K562 (cell line): ENCODE measurements at regions of chr5 and their contacts with region 1.

Region 1: GRCh38 chr5:43401827-43402226 is 10.4 kb downstream of the CCL28 start:
- DNase-seq: peak; percentile 31 to 69 (median 53)
- ATAC-seq: peak; percentile 99
- H3K4me3 ChIP-seq: no peak overlapping the region
- H3K27ac ChIP-seq: no peak overlapping the region
- H3K4me1 ChIP-seq: peaks cover 3 to 4% of the 10 kb centered on the region in 2 experiments
- H3K27me3 ChIP-seq: no peaks in the 10 kb centered on the region
- CTCF ChIP-seq: peak; percentile 46 to 56 (median 53)
- EP300 ChIP-seq: no peak
- POLR2A ChIP-seq: no peak
- RAD21 ChIP-seq: peak; percentile 11 to 30; a peak in 2 of 4 replicates

Region 2: DNA sequence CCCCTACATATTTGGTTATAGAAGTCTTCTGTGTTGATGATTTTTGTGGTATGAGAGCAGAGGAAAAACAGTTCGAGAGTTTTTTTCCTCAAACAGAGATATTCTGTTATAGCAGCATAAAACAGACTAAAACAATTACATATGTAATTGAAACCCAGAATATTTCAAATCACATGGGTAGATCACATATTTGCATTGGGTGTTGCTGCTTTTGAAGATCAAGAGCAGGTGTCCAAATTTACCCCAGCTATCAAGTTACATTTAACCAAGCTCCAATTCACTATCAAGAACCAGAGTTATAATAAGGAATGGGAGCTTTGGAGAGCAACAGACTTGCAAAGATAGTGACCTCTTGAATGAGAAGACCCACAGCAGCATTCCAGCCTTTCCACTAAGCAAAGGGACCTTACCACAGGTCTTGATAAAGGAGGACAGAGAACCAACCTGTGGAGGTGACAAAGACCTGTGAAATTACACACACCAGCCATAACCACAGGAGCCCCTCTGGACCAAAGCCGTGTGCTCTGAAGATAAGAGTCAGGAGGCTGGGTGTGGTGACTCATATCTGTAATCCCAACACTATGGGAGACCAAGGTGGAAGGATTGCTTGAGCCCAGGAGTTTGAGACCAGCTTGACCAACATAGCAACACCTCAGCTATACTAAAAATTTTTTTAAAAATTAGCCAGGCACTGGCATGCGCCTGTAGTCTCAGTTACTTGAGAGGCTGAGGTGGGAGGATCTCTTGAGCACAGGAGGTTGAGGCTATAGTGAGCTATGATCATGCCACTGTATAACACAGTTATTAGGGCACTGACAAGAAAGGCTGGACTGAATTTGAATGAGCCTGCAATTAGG is 14.3 kb after region 1 on chr5:
- CTCF ChIA-PET with region 1: no interaction called
- POLR2A ChIA-PET with region 1: interaction called, 13 read pairs
- in situ Hi-C with region 1: no loop called
- intact Hi-C with region 1: no loop called
- DNase-seq: peak; percentile 63 to 92 (median 78)
- ATAC-seq: peak; percentile 95
- H3K4me3 ChIP-seq: no peak overlapping the region
- H3K27ac ChIP-seq: peak overlapping the region; percentile 9; the same call in 1 of the 3 replicates
- H3K4me1 ChIP-seq: peaks cover 14 to 20% of the 10 kb centered on the region in 2 experiments
- H3K27me3 ChIP-seq: no peaks in the 10 kb centered on the region
- CTCF ChIP-seq: no peak
- EP300 ChIP-seq: peak; percentile 88
- POLR2A ChIP-seq: no peak
- RAD21 ChIP-seq: peak in 1 of 2 experiments; percentile 15; a peak in 1 of 4 replicates